ENCODE measurements at regions of chr7 and their contacts with region 1.

Region 1: GRCh38 chr7:17802056-17802455 is 138.2 kb downstream of the SNX13 start:
- DNase-seq: no peak
- H3K4me3 Mint-ChIP-seq: no peak overlapping the region
- H3K27ac Mint-ChIP-seq: no peak overlapping the region
- H3K4me1 Mint-ChIP-seq: no peaks in the 10 kb centered on the region
- H3K27me3 Mint-ChIP-seq: no peaks in the 10 kb centered on the region
- CTCF ChIP-seq: no peak

Region 2: GRCh38 chr7:17625043-17625442 is 177.0 kb before region 1 on chr7:
- CTCF ChIA-PET with region 1: no interaction called
- intact Hi-C with region 1: no loop called
- DNase-seq: no peak
- H3K4me3 Mint-ChIP-seq: no peak overlapping the region
- H3K27ac Mint-ChIP-seq: no peak overlapping the region
- H3K4me1 Mint-ChIP-seq: peaks cover 30% of the 10 kb centered on the region
- H3K27me3 Mint-ChIP-seq: no peaks in the 10 kb centered on the region
- CTCF ChIP-seq: no peak

Region 3: DNA sequence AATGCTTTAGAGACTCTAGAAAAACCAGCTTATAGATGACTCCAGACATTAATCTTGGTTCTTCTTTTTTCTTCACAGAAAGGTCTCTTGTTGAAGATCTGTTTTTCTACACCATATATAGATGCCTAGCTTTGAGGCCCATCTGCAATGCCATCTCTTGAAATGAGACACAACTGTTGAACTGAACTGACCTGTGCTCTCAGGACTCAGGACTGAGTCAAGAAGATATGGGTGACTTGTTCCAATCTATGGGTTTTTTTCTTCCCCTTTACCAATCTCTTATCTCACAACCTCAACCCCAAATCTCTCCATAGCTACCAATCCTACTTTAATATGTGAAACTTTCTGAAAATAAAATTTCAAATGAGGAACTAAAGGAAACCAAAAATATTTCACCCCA is 56.4 kb before region 1 on chr7:
- CTCF ChIA-PET with region 1: no interaction called
- intact Hi-C with region 1: loop called (anchors 2 kb)
- DNase-seq: no peak
- H3K4me3 Mint-ChIP-seq: no peak overlapping the region
- H3K27ac Mint-ChIP-seq: no peak overlapping the region
- H3K4me1 Mint-ChIP-seq: no peaks in the 10 kb centered on the region
- H3K27me3 Mint-ChIP-seq: no peaks in the 10 kb centered on the region
- CTCF ChIP-seq: no peak

Measured in Calu3 (cell line).